Panc1 (cell line): ENCODE measurements at regions of chr4 and their contacts with region 1.

Region 1: DNA sequence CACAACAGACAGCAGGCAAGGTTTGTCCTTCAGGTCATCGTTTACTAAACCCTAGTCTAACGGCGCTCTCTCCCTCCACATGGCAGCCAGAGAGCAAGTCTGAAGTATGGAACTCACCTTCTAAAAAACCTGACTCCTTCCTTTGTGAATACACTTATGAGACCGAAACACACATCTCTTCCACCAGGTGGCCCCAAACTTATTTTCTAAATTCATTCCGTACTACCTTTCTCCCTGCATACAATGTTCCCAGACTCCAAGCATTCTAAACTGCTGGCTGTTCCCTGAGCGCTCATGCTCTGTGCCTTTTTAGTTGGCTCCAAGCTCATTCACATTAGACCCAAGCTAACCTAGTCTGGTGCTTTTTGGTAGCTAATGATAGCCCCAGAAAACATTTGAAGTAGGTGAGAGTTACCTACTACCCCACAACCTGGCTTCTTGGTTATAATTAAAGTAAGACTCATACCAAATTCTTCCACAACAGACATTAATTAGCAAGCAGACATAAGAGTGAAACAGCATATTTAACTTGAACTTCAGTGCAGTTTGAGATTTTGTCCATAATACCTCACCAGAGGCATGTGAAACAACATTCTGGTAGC is 67.6 kb upstream of the DCLK2 start:
- DNase-seq: peak; percentile 41
- ATAC-seq: peak; percentile 94
- H3K4me3 ChIP-seq: no peak overlapping the region
- H3K27ac ChIP-seq: peak overlapping the region; percentile 72
- H3K4me1 ChIP-seq: peaks cover 3% of the 10 kb centered on the region
- H3K27me3 ChIP-seq: no peaks in the 10 kb centered on the region
- CTCF ChIP-seq: peak; percentile 67

Region 2: DNA sequence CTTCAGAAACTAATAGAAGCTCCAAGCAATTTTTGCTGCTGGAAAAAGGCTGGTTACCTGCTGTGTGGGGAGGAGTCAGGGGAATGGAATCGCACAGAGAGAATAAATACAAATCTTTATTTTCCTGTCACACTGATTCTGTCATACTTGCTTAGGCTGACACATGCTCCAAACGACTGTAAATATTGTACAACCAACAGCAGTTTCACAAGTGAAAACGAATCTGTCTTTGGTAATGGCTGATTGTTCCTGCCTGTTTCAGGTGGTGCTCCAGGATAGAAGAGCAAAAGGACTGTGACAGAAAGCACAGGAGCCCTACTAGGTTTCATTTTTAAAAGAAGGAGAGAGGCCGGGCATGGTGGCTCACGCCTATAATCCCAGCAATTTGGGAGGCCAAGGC is 57.9 kb before region 1 on chr4:
- CTCF ChIA-PET with region 1: no interaction called
- POLR2A ChIA-PET with region 1: interaction called, 10 read pairs
- in situ Hi-C with region 1: no loop called
- intact Hi-C with region 1: no loop called
- DNase-seq: no peak
- ATAC-seq: no peak
- H3K4me3 ChIP-seq: no peak overlapping the region
- H3K27ac ChIP-seq: no peak overlapping the region
- H3K4me1 ChIP-seq: no peaks in the 10 kb centered on the region
- H3K27me3 ChIP-seq: no peaks in the 10 kb centered on the region
- CTCF ChIP-seq: no peak

Region 3: DNA sequence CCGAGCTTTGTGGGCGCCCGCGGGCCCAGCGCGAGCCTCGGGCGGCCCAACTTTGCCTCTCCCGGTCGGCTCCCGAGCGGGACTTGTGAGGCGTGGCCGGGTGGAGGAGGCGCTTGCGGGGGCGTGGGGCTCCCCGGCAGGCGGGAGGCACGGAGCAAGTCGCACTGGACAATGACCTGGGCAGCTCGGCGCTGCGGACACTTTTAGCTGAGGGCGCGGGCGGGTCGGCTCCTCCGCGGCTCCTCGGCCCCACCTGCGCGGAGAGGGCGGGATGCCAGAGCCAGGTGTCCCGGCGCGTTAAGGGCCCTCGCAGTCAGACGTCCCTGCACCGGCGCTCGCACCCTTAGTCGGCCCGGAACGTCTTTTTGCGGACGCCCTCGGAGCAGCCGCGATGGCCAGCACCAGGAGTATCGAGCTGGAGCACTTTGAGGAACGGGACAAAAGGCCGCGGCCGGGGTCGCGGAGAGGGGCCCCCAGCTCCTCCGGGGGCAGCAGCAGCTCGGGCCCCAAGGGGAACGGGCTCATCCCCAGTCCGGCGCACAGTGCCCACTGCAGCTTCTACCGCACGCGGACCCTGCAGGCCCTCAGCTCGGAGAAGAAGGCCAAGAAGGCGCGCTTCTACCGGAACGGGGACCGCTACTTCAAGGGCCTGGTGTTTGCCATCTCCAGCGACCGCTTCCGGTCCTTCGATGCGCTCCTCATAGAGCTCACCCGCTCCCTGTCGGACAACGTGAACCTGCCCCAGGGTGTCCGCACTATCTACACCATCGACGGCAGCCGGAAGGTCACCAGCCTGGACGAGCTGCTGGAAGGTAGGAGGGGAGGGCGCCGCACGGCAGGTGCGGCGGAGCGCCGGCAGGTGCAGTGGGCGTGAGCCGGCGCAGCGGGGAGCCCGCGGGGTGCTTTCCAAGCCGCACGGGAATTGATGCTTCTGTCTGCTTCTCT is 68.3 kb after region 1 on chr4:
- CTCF ChIA-PET with region 1: no interaction called
- POLR2A ChIA-PET with region 1: no interaction called
- in situ Hi-C with region 1: no loop called
- intact Hi-C with region 1: loop called (anchors 2 kb)
- DNase-seq: no peak
- ATAC-seq: peak; percentile 85
- H3K4me3 ChIP-seq: peak overlapping the region; percentile 74 to 78
- H3K27ac ChIP-seq: peak overlapping the region; percentile 65
- H3K4me1 ChIP-seq: peaks cover 25% of the 10 kb centered on the region
- H3K27me3 ChIP-seq: no peaks in the 10 kb centered on the region
- CTCF ChIP-seq: peak; percentile 11

Region 4: GRCh38 chr4:150209140-150209829 is 198.7 kb after region 1 on chr4:
- CTCF ChIA-PET with region 1: no interaction called
- POLR2A ChIA-PET with region 1: interaction called, 4 read pairs
- in situ Hi-C with region 1: no loop called
- intact Hi-C with region 1: loop called (anchors 5 kb)
- DNase-seq: no peak
- ATAC-seq: peak; percentile 82
- H3K4me3 ChIP-seq: no peak overlapping the region
- H3K27ac ChIP-seq: no peak overlapping the region
- H3K4me1 ChIP-seq: peaks cover 2% of the 10 kb centered on the region; the same call in 1 of the 2 replicates
- H3K27me3 ChIP-seq: no peaks in the 10 kb centered on the region
- CTCF ChIP-seq: peak; percentile 63

Region 5: GRCh38 chr4:150242820-150243458 is 232.3 kb after region 1 on chr4:
- CTCF ChIA-PET with region 1: interaction called, 3 read pairs
- POLR2A ChIA-PET with region 1: no interaction called
- in situ Hi-C with region 1: no loop called
- intact Hi-C with region 1: loop called (anchors 5 kb)
- DNase-seq: peak; percentile 50
- ATAC-seq: peak; percentile 70; the same call in 1 of the 2 replicates
- H3K4me3 ChIP-seq: no peak overlapping the region
- H3K27ac ChIP-seq: peak overlapping the region; percentile 70
- H3K4me1 ChIP-seq: peaks cover 22% of the 10 kb centered on the region
- H3K27me3 ChIP-seq: no peaks in the 10 kb centered on the region
- CTCF ChIP-seq: peak; percentile 84